Astrocyte of the cerebellum (primary cell): ENCODE measurements at regions of chr2 and their contacts with region 1.

Region 1: GRCh38 chr2:135265960-135266490 is 213.9 kb downstream of the RAB3GAP1 start:
- DNase-seq: no peak
- H3K4me3 ChIP-seq: no peak overlapping the region
- CTCF ChIP-seq: no peak

Region 2: GRCh38 chr2:135226961-135227360 is 39.1 kb before region 1 on chr2:
- in situ Hi-C with region 1: loop called (anchors 5 kb)
- DNase-seq: no peak
- H3K4me3 ChIP-seq: no peak overlapping the region
- CTCF ChIP-seq: no peak

Region 3: GRCh38 chr2:135532581-135532980 is 266.6 kb after region 1 on chr2:
- in situ Hi-C with region 1: no loop called
- DNase-seq: no peak
- H3K4me3 ChIP-seq: peak overlapping the region; percentile 18
- CTCF ChIP-seq: no peak